ENCODE measurements at regions of chr1 and their contacts with region 1.

Region 1: GRCh38 chr1:5975133-5975880 is 16.9 kb downstream of the NPHP4 start:
- DNase-seq: peak; percentile 30
- H3K4me3 Mint-ChIP-seq: peak overlapping the region; percentile 58
- H3K27ac Mint-ChIP-seq: peak overlapping the region; percentile 78
- H3K4me1 Mint-ChIP-seq: peaks cover 17% of the 10 kb centered on the region
- H3K27me3 Mint-ChIP-seq: no peaks in the 10 kb centered on the region

Region 2: DNA sequence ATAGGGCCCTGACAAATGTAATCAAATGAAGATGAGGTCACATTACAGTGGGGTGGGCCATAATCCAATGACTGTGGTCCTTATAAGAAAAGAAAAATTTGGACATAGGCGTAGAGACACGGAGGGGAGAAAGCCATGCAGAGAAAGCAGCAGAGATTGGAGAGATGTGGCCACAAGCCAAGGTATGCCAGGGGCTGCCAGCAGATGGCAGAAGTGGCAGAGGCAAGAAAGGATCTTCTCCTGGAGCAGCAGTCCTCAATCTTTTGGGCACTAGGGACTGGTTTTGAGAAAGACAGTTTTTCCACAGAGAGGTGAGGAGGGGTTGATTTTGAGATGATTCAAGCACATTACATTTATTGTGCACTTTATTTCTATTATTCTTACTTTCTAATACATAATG is 338.1 kb before region 1 on chr1:
- intact Hi-C with region 1: loop called (anchors 5 kb)
- DNase-seq: no peak
- H3K4me3 Mint-ChIP-seq: no peak overlapping the region
- H3K27ac Mint-ChIP-seq: no peak overlapping the region
- H3K4me1 Mint-ChIP-seq: no peaks in the 10 kb centered on the region
- H3K27me3 Mint-ChIP-seq: peaks cover 7% of the 10 kb centered on the region

Region 3: GRCh38 chr1:5915587-5916571 is 59.4 kb before region 1 on chr1:
- intact Hi-C with region 1: loop called (anchors 1 kb)
- DNase-seq: no peak
- H3K4me3 Mint-ChIP-seq: no peak overlapping the region
- H3K27ac Mint-ChIP-seq: peak overlapping the region; percentile 64
- H3K4me1 Mint-ChIP-seq: peaks cover 9% of the 10 kb centered on the region
- H3K27me3 Mint-ChIP-seq: no peaks in the 10 kb centered on the region

Measured in activated T-helper 1 cell treated with anti-CD3 and anti-CD28 coated beads, Interleukin-12 subunit alpha, Interleukin-12 subunit beta, Interleukin-2, Interleukin-4 antibody, amounts not matched to agents 30 ng/mL and 10 ng/mL and 1 ng/mL, durations not matched to agents 14 hours and 24 hours and 36 hours (primary cell).